Esophagus squamous epithelium (tissue), 5 donors: ENCODE measurements at regions of chr6 and their contacts with region 1.

Region 1: GRCh38 chr6:33008944-33009861 is at the start of gene HLA-DOA:
- DNase-seq: no peak
- H3K4me3 ChIP-seq: peak within 1 kb of the TSS in 3 of 4 donors; percentile 9 to 49 (median 31)
- H3K27ac ChIP-seq: peak within 1 kb of the TSS in 2 of 4 donors; percentile 0 to 39
- H3K4me1 ChIP-seq: peaks cover 0 to 10% (median 0%) of the 10 kb centered on the region in 3 donors
- H3K27me3 ChIP-seq: peaks cover 0 to 47% (median 2%) of the 10 kb centered on the region in 4 donors
- CTCF ChIP-seq: no peak
- POLR2A ChIP-seq: peak in 1 of 4 donors; percentile 51
- total RNA-seq, gene HLA-DOA: 0.61 to 9.7 (median 1.6) TPM

Region 2: DNA sequence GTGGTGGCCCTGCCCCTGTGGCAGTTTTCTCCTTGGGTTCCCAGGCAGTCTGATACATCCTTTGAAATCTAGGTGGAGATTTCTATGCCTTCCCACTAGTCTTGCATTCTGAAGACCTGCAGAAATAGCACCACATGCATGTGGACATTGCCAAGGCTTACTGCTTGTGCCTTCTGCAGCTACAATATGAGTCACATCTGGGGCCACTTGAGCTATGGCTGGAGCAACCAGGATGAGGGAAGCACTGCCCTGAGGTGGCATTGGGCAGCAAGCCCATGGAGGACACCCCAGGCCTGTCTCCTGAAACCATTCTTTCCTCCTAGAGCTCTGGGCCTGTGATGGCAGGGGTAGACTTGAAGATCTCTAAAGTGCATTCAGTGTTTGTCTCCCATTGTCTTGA is 230.2 kb before region 1 on chr6:
- intact Hi-C with region 1: no loop called
- DNase-seq: no peak
- H3K4me3 ChIP-seq: no peak overlapping the region
- H3K27ac ChIP-seq: no peak overlapping the region
- H3K4me1 ChIP-seq: peaks cover 0 to 7% (median 3%) of the 10 kb centered on the region in 3 donors
- H3K27me3 ChIP-seq: peaks cover 0 to 32% (median 0%) of the 10 kb centered on the region in 4 donors
- CTCF ChIP-seq: no peak
- POLR2A ChIP-seq: no peak

Region 3: GRCh38 chr6:33235221-33235634 is 226.0 kb after region 1 on chr6:
- intact Hi-C with region 1: loop called (anchors 10 kb)
- DNase-seq: no peak
- H3K4me3 ChIP-seq: no peak overlapping the region
- H3K27ac ChIP-seq: no peak overlapping the region
- H3K4me1 ChIP-seq: no peaks in the 10 kb centered on the region
- H3K27me3 ChIP-seq: peaks cover 0 to 78% (median 3%) of the 10 kb centered on the region in 4 donors
- CTCF ChIP-seq: no peak
- POLR2A ChIP-seq: no peak